ENCODE measurements at regions of chr3 and their contacts with region 1.

Region 1: GRCh38 chr3:61829750-61830400 is 268.5 kb downstream of the PTPRG start:
- DNase-seq: no peak
- H3K4me3 ChIP-seq: no peak overlapping the region
- H3K27ac ChIP-seq: peak overlapping the region; percentile 18
- H3K4me1 ChIP-seq: no peaks in the 10 kb centered on the region
- H3K27me3 ChIP-seq: no peaks in the 10 kb centered on the region
- CTCF ChIP-seq: no peak
- POLR2A ChIP-seq: no peak

Region 2: DNA sequence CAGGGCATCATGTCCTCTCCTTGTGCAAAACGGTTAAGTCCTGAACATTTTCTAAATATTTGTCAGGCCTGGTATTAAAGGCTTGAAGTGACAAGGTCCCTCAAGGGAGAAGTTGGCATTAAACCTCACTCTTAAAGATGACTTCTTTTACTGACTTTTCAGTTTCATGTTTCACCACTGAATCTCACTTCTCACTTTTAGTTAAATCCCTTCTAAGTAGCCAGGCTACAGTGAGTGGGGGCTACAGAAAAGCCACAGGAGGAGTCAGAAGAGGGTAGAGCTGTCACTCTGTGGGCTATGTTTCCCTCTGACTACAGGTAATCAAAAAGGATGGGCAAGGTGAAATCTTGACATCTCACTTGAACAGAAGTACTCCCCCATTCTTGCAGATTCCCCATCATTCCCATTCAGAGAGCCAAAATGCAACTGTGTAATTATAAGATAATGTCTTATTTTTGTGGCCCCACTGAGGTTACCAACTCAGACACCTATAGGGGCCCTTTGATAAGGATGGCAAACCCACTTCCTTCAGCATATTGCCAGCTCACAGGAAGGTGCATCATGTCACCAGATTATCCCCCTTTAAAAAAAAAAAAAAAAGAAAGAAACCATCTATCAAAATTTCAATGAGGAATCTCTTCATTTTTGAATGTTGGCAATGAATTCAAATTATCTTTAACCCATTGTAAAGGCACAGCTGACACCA is 1989.9 kb before region 1 on chr3:
- intact Hi-C with region 1: loop called (anchors 5 kb)
- DNase-seq: no peak
- H3K4me3 ChIP-seq: no peak overlapping the region
- H3K27ac ChIP-seq: no peak overlapping the region
- H3K4me1 ChIP-seq: no peaks in the 10 kb centered on the region
- H3K27me3 ChIP-seq: no peaks in the 10 kb centered on the region
- CTCF ChIP-seq: no peak
- POLR2A ChIP-seq: no peak

Region 3: GRCh38 chr3:61589856-61590255 is 240.0 kb before region 1 on chr3:
- intact Hi-C with region 1: no loop called
- DNase-seq: no peak
- H3K4me3 ChIP-seq: no peak overlapping the region
- H3K27ac ChIP-seq: no peak overlapping the region
- H3K4me1 ChIP-seq: peaks cover 7% of the 10 kb centered on the region
- H3K27me3 ChIP-seq: no peaks in the 10 kb centered on the region
- CTCF ChIP-seq: no peak
- POLR2A ChIP-seq: no peak

Measured in vagina (tissue), 2 donors.